IMR-90 (cell line): ENCODE measurements at regions of chr2 and their contacts with region 1.

Region 1: DNA sequence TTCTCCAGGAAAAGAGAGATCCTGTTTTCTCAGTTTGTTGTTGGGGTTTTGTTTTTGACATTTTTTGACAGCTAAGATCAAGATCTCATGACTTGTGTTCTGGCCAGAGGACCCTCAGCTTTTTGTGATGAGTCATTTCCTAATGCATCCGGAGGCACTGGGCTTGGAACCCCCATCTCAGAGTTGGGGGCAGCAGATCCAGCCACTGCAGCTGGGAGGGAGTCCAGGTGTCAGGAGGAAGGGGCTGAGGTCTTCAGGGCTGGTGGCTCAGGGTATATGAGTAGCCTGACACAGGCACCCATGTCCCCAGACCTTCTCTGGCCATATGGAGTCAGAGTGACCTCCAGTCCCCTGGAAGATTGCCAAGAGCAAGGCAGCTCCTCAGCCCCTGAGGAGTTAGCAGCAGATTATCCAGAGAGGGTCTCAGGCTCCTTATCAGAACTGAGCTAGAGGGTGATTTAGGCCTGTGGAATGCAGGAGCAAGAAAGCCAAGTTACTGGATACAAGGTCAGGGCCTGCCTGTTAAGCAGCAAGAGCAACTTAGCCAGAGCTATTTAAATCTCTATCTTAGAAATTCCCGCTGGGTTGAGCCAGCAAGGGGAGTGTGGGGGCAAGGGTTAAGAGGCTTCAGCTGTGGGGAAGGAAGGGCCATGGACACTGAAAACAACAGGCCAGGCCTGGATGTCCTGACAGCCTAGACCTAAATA is 62.4 kb downstream of the TANC1 start:
- DNase-seq: peak; percentile 83
- ATAC-seq: peak; percentile 89
- H3K4me3 ChIP-seq: no peak overlapping the region
- H3K27ac ChIP-seq: peak overlapping the region; percentile 49
- H3K4me1 ChIP-seq: peaks cover 26% of the 10 kb centered on the region
- H3K27me3 ChIP-seq: no peaks in the 10 kb centered on the region
- CTCF ChIP-seq: no peak
- POLR2A ChIP-seq: no peak
- RAD21 ChIP-seq: no peak

Region 2: GRCh38 chr2:158968396-158969161 is 62.2 kb before region 1 on chr2 and contains the start of gene TANC1:
- CTCF ChIA-PET with region 1: no interaction called
- POLR2A ChIA-PET with region 1: no interaction called
- dilution Hi-C with region 1: no loop called
- in situ Hi-C with region 1: no loop called
- intact Hi-C with region 1: loop called (anchors 1 kb)
- DNase-seq: peak; percentile 90
- ATAC-seq: peak; percentile 93
- H3K4me3 ChIP-seq: peak within 1 kb of the TSS; percentile 87
- H3K27ac ChIP-seq: peak within 1 kb of the TSS; percentile 90
- H3K4me1 ChIP-seq: peaks cover 10% of the 10 kb centered on the region
- H3K27me3 ChIP-seq: no peaks in the 10 kb centered on the region
- CTCF ChIP-seq: no peak
- POLR2A ChIP-seq: peak; percentile 88
- RAD21 ChIP-seq: no peak; the same call in 1 of the 2 replicates
- total RNA-seq, gene TANC1: 12.8 and 12.9 TPM in 2 replicates

Region 3: DNA sequence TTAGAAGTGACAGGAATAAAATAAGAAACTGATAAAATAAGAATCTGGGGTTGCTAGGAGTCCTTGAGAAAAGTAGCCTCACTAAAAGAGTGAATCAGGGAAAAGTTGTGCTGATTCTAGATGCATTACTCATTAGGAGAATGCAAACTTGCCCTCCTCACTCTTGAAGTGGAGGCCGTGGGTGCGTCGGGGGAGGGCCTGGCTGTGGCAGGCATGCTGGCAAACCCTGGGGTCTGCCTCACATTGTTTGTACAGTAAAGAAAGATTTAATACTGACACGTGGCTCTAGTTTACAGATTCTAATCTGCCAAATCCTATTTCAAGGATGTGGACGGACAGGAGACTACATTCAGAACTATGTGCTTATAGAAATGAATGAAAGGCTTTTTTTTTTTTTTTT is 20.5 kb before region 1 on chr2:
- CTCF ChIA-PET with region 1: interaction called, 3 read pairs
- POLR2A ChIA-PET with region 1: no interaction called
- dilution Hi-C with region 1: no loop called
- in situ Hi-C with region 1: no loop called
- intact Hi-C with region 1: loop called (anchors 2 kb)
- DNase-seq: peak; percentile 80
- ATAC-seq: peak; percentile 97
- H3K4me3 ChIP-seq: no peak overlapping the region
- H3K27ac ChIP-seq: peak overlapping the region; percentile 35; the same call in 1 of the 2 replicates
- H3K4me1 ChIP-seq: peaks cover 2% of the 10 kb centered on the region; the same call in 1 of the 2 replicates
- H3K27me3 ChIP-seq: no peaks in the 10 kb centered on the region
- CTCF ChIP-seq: no peak
- POLR2A ChIP-seq: no peak
- RAD21 ChIP-seq: no peak

Region 4: GRCh38 chr2:159044804-159045286 is 14.0 kb after region 1 on chr2:
- CTCF ChIA-PET with region 1: interaction called, 4 read pairs
- POLR2A ChIA-PET with region 1: interaction called, 5 read pairs
- dilution Hi-C with region 1: no loop called
- in situ Hi-C with region 1: no loop called
- intact Hi-C with region 1: loop called (anchors 2 kb)
- DNase-seq: no peak
- ATAC-seq: no peak
- H3K4me3 ChIP-seq: no peak overlapping the region
- H3K27ac ChIP-seq: no peak overlapping the region
- H3K4me1 ChIP-seq: peaks cover 20% of the 10 kb centered on the region
- H3K27me3 ChIP-seq: no peaks in the 10 kb centered on the region
- CTCF ChIP-seq: no peak
- POLR2A ChIP-seq: no peak
- RAD21 ChIP-seq: no peak

Region 5: GRCh38 chr2:159111346-159111924 is 80.6 kb after region 1 on chr2:
- CTCF ChIA-PET with region 1: no interaction called
- POLR2A ChIA-PET with region 1: no interaction called
- dilution Hi-C with region 1: no loop called
- in situ Hi-C with region 1: no loop called
- intact Hi-C with region 1: loop called (anchors 5 kb)
- DNase-seq: no peak
- ATAC-seq: peak; percentile 21; the same call in 1 of the 2 replicates
- H3K4me3 ChIP-seq: no peak overlapping the region
- H3K27ac ChIP-seq: no peak overlapping the region
- H3K4me1 ChIP-seq: peaks cover 8% of the 10 kb centered on the region
- H3K27me3 ChIP-seq: no peaks in the 10 kb centered on the region
- CTCF ChIP-seq: no peak
- POLR2A ChIP-seq: no peak
- RAD21 ChIP-seq: no peak

Region 6: GRCh38 chr2:159797543-159798375 is 766.9 kb after region 1 on chr2 and contains the start of gene CD302:
- CTCF ChIA-PET with region 1: no interaction called
- POLR2A ChIA-PET with region 1: no interaction called
- dilution Hi-C with region 1: no loop called
- in situ Hi-C with region 1: no loop called
- intact Hi-C with region 1: no loop called
- DNase-seq: peak; percentile 45
- ATAC-seq: peak; percentile 92
- H3K4me3 ChIP-seq: peak within 1 kb of the TSS; percentile 90
- H3K27ac ChIP-seq: peak within 1 kb of the TSS; percentile 49
- H3K4me1 ChIP-seq: peaks cover 4% of the 10 kb centered on the region
- H3K27me3 ChIP-seq: 0 out of 2 replicates have a peak, but pooled peaks cover 2% of the 10 kb centered on the region
- CTCF ChIP-seq: no peak
- POLR2A ChIP-seq: no peak
- RAD21 ChIP-seq: no peak
- total RNA-seq, gene CD302: 3.8 and 6.1 TPM in 2 replicates